Gastrocnemius medialis (tissue), 4 donors: ENCODE measurements at regions of chr1 and their contacts with region 1.

Region 1: GRCh38 chr1:161132410-161133219 is at the start of gene DEDD:
- DNase-seq: peak; percentile 95 to 96
- ATAC-seq: peak; percentile 96 to 98
- H3K4me3 ChIP-seq: peak within 1 kb of the TSS; percentile 83 to 91 (median 84)
- H3K27ac ChIP-seq: peak within 1 kb of the TSS; percentile 94 to 98 (median 96)
- H3K4me1 ChIP-seq: peaks cover 55 to 56% of the 10 kb centered on the region in 2 donors
- H3K27me3 ChIP-seq: no peaks in the 10 kb centered on the region
- CTCF ChIP-seq: no peak
- POLR2A ChIP-seq: peak; percentile 65 to 68
- total RNA-seq, gene DEDD: 40.2 to 60.2 (median 46.3) TPM

Region 2: GRCh38 chr1:161045750-161046571 is 86.7 kb before region 1 on chr1 and contains the start of gene USF1:
- in situ Hi-C with region 1: no loop called
- intact Hi-C with region 1: loop called (anchors 1 kb)
- DNase-seq: peak; percentile 85 to 93
- ATAC-seq: peak; percentile 97
- H3K4me3 ChIP-seq: peak within 1 kb of the TSS; percentile 87 to 99 (median 90)
- H3K27ac ChIP-seq: peak within 1 kb of the TSS; percentile 88 to 98 (median 94)
- H3K4me1 ChIP-seq: peaks cover 17 to 21% of the 10 kb centered on the region in 2 donors
- H3K27me3 ChIP-seq: no peaks in the 10 kb centered on the region
- CTCF ChIP-seq: no peak
- POLR2A ChIP-seq: peak in 1 of 2 donors; percentile 68
- total RNA-seq, gene USF1: 41.9 to 55.1 (median 49.1) TPM

Region 3: DNA sequence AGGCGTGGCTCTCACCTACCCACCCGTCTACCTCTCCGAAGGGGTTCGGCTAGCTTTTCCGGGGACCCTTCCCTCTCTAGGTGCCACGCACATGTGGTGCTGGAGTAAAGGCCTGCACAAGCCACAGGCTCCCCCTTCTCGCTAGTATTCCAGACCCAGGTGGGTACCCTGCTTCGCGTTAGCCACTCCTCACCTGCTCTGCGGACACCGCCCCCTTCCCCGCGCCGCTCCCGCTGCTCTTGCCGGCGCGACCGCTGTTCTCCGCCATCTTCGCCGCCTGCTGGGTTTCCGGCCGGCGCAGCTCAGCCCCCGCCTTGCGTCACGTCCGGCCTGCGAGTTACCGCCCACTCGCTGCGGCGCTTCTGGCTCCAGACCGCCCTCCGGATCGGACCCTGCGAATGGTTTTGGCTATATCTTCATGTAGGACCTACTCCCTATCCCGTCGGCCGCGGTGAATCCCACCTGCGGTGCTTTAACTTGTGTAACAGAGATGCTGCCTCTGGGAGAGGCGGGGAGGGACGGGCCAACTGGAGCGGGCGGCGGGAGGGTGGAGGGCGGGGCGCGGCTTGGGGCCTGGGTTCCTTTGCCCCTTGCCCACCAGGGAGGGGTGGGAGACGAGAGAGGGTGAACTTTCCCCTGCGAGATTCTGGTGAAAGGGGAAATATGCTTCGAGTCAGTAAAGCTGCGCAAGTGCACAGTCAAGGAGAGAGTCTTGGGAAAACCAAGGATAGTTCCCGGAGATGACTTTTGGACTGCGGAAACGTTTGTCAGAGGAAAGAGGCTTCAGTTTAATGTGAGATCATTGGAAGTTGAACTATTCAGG is 14.6 kb before region 1 on chr1 and contains the starts of genes NIT1 and PFDN2:
- in situ Hi-C with region 1: no loop called
- intact Hi-C with region 1: loop called (anchors 1 kb)
- DNase-seq: peak; percentile 76 to 78
- ATAC-seq: peak; percentile 84 to 86
- H3K4me3 ChIP-seq: peak within 1 kb of the TSS; percentile 83 to 100 (median 99)
- H3K27ac ChIP-seq: peak within 1 kb of the TSS; percentile 90 to 100 (median 98)
- H3K4me1 ChIP-seq: peaks cover 53% of the 10 kb centered on the region in 2 donors
- H3K27me3 ChIP-seq: no peaks in the 10 kb centered on the region
- CTCF ChIP-seq: no peak
- POLR2A ChIP-seq: peak; percentile 91 to 94
- total RNA-seq, gene NIT1: 16.1 to 20.4 (median 17.9) TPM
- total RNA-seq, gene PFDN2: 62.4 to 106 (median 74.1) TPM

Region 4: DNA sequence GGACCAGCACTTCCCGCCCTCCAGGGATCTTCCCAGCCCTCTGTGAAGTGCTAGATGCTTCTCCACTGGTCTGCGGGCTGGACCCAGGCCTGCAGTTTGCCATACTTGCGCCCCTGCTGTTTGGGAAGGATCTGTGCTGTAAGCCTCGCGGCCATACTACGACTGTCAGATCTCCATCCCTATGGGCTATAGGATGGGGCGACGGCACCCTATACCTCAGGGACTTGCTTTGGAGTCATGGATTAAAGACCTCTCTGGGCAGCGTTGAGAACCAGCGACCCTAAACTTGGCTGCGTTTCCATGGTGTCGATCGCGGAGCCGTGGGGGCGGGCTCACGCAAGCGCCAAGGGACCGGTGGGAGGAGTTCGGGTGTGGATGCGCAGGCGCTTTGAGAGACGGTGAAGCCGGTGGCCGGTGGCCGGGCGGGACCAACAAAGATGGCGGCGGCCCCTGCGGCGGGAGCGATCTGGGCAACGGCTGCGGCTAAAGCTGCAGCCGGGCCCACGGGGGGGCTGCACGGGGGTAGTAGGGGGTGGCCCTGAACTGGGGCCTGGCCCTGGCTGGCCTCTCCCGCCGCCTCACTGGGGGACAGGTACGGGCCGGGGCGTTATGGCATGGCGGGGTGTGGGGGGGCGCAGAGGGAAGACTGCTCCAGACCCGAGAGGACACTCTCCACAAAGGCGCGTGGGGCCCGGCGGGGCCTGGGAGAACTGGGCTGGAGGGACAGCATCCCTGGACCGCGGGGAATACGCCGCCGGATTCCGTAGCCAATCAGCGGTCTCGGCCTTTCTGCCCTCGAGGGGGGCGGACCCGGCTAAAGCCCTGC is 26.7 kb after region 1 on chr1 and contains the start of gene USP21:
- in situ Hi-C with region 1: no loop called
- intact Hi-C with region 1: loop called (anchors 1 kb)
- DNase-seq: peak; percentile 88 to 89
- ATAC-seq: peak; percentile 96 to 97
- H3K4me3 ChIP-seq: peak within 1 kb of the TSS; percentile 82 to 100 (median 95)
- H3K27ac ChIP-seq: peak within 1 kb of the TSS; percentile 90 to 95 (median 92)
- H3K4me1 ChIP-seq: peaks cover 25 to 31% of the 10 kb centered on the region in 2 donors
- H3K27me3 ChIP-seq: no peaks in the 10 kb centered on the region
- CTCF ChIP-seq: peak in 2 of 5 experiments; percentile 10 to 32
- POLR2A ChIP-seq: peak; percentile 47 to 54
- total RNA-seq, gene USP21: 16.5 to 20.8 (median 18.0) TPM

Region 5: DNA sequence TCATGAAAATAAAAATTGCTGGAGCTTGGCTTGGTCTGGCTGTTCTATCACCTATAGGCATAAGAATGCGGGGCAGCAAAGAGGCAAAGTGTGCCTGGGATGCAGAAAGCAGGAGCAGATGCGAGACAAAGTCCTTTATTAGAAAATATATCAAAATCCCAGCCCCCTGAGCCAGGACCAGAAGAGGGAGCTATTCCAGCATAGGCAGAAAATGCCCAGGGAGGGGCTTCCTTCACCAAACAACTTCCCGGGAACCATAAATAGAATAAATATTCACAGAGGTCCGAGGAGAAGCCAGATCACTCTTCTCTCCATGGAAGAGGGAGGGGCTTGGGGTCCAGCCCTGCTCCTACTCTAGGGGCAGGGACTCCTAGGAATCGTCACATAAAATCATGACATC is 38.6 kb after region 1 on chr1:
- in situ Hi-C with region 1: no loop called
- intact Hi-C with region 1: no loop called
- DNase-seq: no peak
- ATAC-seq: no peak
- H3K4me3 ChIP-seq: no peak overlapping the region
- H3K27ac ChIP-seq: peak overlapping the region in 2 of 4 donors; percentile 43 to 57
- H3K4me1 ChIP-seq: peaks cover 22 to 23% of the 10 kb centered on the region in 2 donors
- H3K27me3 ChIP-seq: no peaks in the 10 kb centered on the region
- CTCF ChIP-seq: no peak
- POLR2A ChIP-seq: no peak